Caco-2 (cell line): ENCODE measurements at regions of chr2 and their contacts with region 1.

Region 1: DNA sequence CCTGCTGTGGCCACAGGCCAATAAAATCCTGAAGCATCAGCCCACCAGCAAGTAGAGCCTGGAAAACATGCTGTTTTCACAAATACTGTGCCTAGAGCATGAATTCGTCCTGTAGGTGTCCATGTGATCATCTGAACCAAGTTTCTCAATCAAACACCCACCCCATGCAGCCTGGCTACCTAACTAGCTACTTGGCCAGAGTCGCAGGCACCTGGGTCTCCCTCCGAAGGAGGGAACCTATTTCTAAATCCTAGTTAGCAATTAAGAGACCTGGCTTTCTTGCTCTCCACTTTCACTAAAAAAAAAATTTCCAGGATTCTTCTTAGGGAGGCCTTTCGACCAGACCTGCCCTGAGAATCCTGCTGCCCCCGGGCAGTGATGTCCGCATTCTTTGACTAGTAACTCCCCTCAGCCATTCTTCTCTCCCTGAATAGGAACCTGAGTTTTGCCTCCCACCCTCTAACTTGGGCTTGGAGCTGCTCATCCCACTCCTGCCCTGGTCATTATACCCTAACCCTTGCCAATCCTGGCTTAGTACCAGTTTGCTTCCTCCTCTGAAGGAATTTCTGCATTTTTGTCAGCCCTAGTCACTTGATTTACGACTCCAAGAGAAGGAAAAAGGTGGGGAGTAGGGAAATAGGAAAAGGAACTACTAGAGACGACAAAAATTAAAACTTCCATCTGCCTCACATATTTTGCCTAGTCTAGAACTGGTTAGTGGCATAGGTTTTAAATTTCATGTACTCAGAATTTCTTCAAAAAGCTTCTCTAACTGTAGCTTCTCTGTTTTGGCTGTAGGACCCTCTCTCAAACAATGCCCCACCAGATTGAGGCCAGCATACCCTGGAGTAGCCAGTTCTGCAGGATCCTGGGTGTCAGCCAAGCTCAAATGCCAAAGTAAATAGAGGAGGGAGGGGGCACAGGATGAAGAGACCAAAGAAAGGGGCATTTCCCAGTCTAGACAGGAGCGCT is 25.4 kb upstream of the TANK start:
- DNase-seq: peak; percentile 26 to 54
- H3K4me3 ChIP-seq: no peak overlapping the region
- H3K4me3 Mint-ChIP-seq: peak overlapping the region; percentile 37
- H3K27ac Mint-ChIP-seq: peak overlapping the region; percentile 90
- H3K4me1 ChIP-seq: peaks cover 33% of the 10 kb centered on the region
- H3K4me1 Mint-ChIP-seq: peaks cover 21% of the 10 kb centered on the region
- H3K27me3 ChIP-seq: no peaks in the 10 kb centered on the region
- H3K27me3 Mint-ChIP-seq: no peaks in the 10 kb centered on the region
- CTCF ChIP-seq: no peak

Region 2: GRCh38 chr2:161113693-161114575 is 20.9 kb before region 1 on chr2:
- CTCF ChIA-PET with region 1: interaction called, 5 read pairs
- POLR2A ChIA-PET with region 1: no interaction called
- intact Hi-C with region 1: loop called (anchors 2 kb)
- DNase-seq: no peak
- H3K4me3 ChIP-seq: no peak overlapping the region
- H3K4me3 Mint-ChIP-seq: no peak overlapping the region
- H3K27ac Mint-ChIP-seq: peak overlapping the region; percentile 49
- H3K4me1 ChIP-seq: peaks cover 30% of the 10 kb centered on the region
- H3K4me1 Mint-ChIP-seq: peaks cover 27% of the 10 kb centered on the region
- H3K27me3 ChIP-seq: no peaks in the 10 kb centered on the region
- H3K27me3 Mint-ChIP-seq: no peaks in the 10 kb centered on the region
- CTCF ChIP-seq: no peak